ENCODE measurements at regions of chr5 and their contacts with region 1.

Region 1: DNA sequence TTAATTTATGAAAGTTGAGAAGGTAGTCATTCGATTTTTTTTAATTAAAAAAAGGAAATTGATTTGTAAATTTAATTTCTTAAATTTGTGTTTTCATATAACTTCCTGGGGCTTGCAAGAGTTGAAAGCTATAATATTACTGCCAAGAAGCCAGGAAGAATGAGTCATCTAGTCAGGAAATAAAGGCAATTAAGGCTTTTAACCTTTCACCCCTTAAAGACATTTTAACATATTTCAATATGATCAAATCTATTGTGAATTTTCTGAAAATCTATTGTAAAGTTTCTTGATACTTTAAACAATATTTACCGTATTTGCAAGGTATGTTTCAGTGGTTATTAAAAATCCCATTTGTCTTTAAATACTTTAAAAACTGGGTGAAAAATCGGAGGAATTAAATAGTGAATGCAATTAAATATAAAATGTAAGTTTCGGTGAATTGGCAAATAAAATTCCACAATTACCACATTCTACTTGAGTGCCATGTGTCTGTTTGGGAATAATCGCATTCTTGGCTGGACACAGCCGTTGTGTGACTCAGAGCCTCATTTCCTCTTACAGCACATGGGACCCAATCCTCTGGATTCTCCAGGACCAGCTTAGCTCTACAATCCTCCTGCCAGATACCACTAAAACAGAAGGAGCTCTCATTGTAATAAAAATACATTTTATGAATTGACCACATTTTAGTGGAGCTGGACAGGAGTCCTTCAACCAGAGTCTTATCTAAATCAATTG is 310.7 kb downstream of the HCN1 start:
- DNase-seq: peak; percentile 96
- H3K4me3 ChIP-seq: no peak overlapping the region
- H3K27ac ChIP-seq: peak overlapping the region; percentile 25
- H3K4me1 ChIP-seq: peaks cover 40% of the 10 kb centered on the region
- H3K27me3 ChIP-seq: no peaks in the 10 kb centered on the region
- CTCF ChIP-seq: no peak

Region 2: DNA sequence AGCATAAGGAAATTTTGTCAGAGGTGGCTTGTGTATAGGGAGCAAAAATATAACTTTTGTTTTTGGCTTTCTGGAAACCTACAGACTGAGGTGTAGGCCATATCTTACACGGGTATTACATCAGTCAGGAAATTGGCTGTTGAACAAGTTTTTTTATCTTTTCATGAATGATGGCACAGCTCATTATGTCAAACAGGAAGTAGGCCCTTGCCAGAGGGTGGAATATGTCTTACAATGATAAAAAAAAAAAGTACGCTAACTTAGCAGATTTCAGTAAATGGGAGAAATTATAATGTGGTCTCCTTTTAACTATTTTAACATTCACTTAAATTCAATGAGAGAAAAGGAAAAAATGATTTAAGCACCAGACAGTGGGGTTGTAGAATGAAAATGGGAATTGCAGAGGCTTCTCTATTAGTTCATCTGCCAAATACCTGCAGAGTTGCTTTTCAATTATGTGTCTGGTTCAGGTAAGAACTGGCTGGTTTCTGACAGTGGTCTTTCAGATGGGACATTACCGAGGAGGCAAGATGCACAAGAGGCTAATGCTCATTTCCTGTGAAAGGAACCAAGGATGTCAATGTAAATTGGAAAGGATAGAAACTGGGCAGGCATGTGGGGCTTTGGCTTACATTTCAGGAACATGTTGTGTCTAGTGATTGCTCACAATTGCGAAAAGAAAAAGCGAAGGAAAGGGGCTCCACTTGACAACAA is 1612.6 kb before region 1 on chr5:
- CTCF ChIA-PET with region 1: no interaction called
- POLR2A ChIA-PET with region 1: no interaction called
- intact Hi-C with region 1: loop called (anchors 10 kb)
- DNase-seq: peak; percentile 92
- H3K4me3 ChIP-seq: peak overlapping the region; percentile 8
- H3K27ac ChIP-seq: peak overlapping the region; percentile 97
- H3K4me1 ChIP-seq: peaks cover 50% of the 10 kb centered on the region
- H3K27me3 ChIP-seq: no peaks in the 10 kb centered on the region
- CTCF ChIP-seq: no peak

Region 3: GRCh38 chr5:45179686-45180085 is 205.8 kb before region 1 on chr5:
- CTCF ChIA-PET with region 1: no interaction called
- POLR2A ChIA-PET with region 1: no interaction called
- intact Hi-C with region 1: no loop called
- DNase-seq: no peak
- H3K4me3 ChIP-seq: no peak overlapping the region
- H3K27ac ChIP-seq: no peak overlapping the region
- H3K4me1 ChIP-seq: peaks cover 12% of the 10 kb centered on the region
- H3K27me3 ChIP-seq: no peaks in the 10 kb centered on the region
- CTCF ChIP-seq: no peak

Region 4: GRCh38 chr5:45372629-45373028 is 12.9 kb before region 1 on chr5:
- CTCF ChIA-PET with region 1: no interaction called
- POLR2A ChIA-PET with region 1: no interaction called
- intact Hi-C with region 1: no loop called
- DNase-seq: no peak
- H3K4me3 ChIP-seq: no peak overlapping the region
- H3K27ac ChIP-seq: no peak overlapping the region
- H3K4me1 ChIP-seq: no peaks in the 10 kb centered on the region
- H3K27me3 ChIP-seq: no peaks in the 10 kb centered on the region
- CTCF ChIP-seq: no peak

Region 5: GRCh38 chr5:45411971-45412612 is 26.6 kb after region 1 on chr5:
- CTCF ChIA-PET with region 1: no interaction called
- POLR2A ChIA-PET with region 1: interaction called, 3 read pairs
- intact Hi-C with region 1: loop called (anchors 1 kb)
- DNase-seq: peak; percentile 58
- H3K4me3 ChIP-seq: no peak overlapping the region
- H3K27ac ChIP-seq: no peak overlapping the region
- H3K4me1 ChIP-seq: peaks cover 30% of the 10 kb centered on the region
- H3K27me3 ChIP-seq: no peaks in the 10 kb centered on the region
- CTCF ChIP-seq: no peak

Measured in A673 (cell line).